ENCODE measurements at regions of chr7 and their contacts with region 1.

Region 1: GRCh38 chr7:98745722-98746318 is 124.0 kb downstream of the TMEM130 start:
- DNase-seq: peak; percentile 54 to 90 (median 84)
- ATAC-seq: peak; percentile 80
- H3K4me3 ChIP-seq: no peak overlapping the region
- H3K4me1 ChIP-seq: no peaks in the 10 kb centered on the region
- CTCF ChIP-seq: peak; percentile 61

Region 2: DNA sequence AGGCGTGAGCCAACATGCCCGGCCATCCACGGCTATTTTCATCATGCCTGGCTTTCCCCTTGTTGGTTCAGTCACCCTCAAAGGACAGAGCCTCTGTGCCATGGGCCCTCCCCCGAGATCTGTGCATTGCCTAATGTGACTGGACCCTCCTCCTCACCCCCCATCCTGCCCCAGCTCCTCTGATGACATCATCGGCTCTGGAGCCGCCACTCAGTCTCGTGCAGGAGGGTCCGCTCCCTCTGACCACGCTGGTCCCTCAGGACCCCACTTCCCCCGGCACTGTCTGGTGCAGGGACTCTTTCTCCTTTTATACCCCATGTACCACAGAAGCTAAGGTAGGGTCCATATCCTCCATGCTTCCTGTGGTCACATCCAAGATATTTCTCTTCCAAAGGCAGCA is 311.7 kb before region 1 on chr7:
- intact Hi-C with region 1: loop called in 1 of 2 experiments (anchors 10 kb)
- DNase-seq: no peak
- ATAC-seq: no peak
- H3K4me3 ChIP-seq: no peak overlapping the region
- H3K4me1 ChIP-seq: no peaks in the 10 kb centered on the region
- CTCF ChIP-seq: no peak

Region 3: DNA sequence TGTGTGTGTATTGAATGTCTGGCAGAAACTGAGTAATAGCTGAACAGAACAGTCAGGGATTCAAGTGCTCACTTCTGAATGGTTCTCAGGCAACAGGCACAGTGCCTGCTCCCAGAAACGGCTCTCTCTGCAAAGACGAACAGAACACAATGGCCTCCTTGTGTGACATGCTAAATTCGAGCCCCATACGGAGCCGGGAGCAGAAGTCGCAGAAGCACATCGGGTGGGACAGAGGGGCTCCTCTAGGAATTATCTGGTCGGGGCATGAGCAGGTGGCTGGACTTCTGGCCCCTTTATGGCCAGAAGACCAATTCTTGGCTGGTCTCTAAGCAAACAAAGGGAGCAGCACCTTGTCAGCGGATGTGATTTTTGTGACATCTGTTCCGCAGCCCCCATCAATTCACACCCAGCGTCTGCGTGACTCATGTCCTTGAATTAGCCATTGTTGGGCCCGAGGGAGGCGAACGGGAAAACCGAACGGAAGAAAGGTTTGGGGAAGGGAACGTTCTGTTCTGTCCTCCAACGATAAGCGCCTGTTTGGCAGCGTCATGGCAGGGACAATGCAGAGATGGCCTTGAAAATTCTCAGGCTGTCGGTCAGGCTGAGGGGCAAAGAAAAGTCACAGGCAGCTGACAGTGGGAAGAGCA is 176.0 kb before region 1 on chr7:
- intact Hi-C with region 1: no loop called
- DNase-seq: no peak
- ATAC-seq: peak; percentile 62
- H3K4me3 ChIP-seq: no peak overlapping the region
- H3K4me1 ChIP-seq: no peaks in the 10 kb centered on the region
- CTCF ChIP-seq: no peak

Region 4: GRCh38 chr7:98779800-98780587 is 34.2 kb after region 1 on chr7:
- intact Hi-C with region 1: no loop called
- DNase-seq: no peak
- ATAC-seq: no peak
- H3K4me3 ChIP-seq: no peak overlapping the region
- H3K4me1 ChIP-seq: no peaks in the 10 kb centered on the region
- CTCF ChIP-seq: no peak

Region 5: GRCh38 chr7:99005776-99006175 is 260.0 kb after region 1 on chr7:
- intact Hi-C with region 1: no loop called
- DNase-seq: peak in 1 of 3 donors; percentile 28
- ATAC-seq: no peak
- H3K4me3 ChIP-seq: no peak overlapping the region
- H3K4me1 ChIP-seq: no peaks in the 10 kb centered on the region
- CTCF ChIP-seq: no peak